Heart left ventricle (tissue), 16 donors: ENCODE measurements at regions of chr17 and their contacts with region 1.

Region 1: GRCh38 chr17:40098846-40099618 is 1.4 kb downstream of the NR1D1 start:
- DNase-seq: peak; percentile 100
- ATAC-seq: peak; percentile 75 to 87 (median 82)
- H3K4me3 ChIP-seq: peak overlapping the region; percentile 72 to 100 (median 84)
- H3K27ac ChIP-seq: peak overlapping the region; percentile 93 to 100 (median 98)
- H3K4me1 ChIP-seq: peaks cover 20 to 93% (median 79%) of the 10 kb centered on the region in 12 donors
- H3K27me3 ChIP-seq: no peaks in the 10 kb centered on the region
- CTCF ChIP-seq: no peak
- POLR2A ChIP-seq: peak; percentile 64 to 89

Region 2: DNA sequence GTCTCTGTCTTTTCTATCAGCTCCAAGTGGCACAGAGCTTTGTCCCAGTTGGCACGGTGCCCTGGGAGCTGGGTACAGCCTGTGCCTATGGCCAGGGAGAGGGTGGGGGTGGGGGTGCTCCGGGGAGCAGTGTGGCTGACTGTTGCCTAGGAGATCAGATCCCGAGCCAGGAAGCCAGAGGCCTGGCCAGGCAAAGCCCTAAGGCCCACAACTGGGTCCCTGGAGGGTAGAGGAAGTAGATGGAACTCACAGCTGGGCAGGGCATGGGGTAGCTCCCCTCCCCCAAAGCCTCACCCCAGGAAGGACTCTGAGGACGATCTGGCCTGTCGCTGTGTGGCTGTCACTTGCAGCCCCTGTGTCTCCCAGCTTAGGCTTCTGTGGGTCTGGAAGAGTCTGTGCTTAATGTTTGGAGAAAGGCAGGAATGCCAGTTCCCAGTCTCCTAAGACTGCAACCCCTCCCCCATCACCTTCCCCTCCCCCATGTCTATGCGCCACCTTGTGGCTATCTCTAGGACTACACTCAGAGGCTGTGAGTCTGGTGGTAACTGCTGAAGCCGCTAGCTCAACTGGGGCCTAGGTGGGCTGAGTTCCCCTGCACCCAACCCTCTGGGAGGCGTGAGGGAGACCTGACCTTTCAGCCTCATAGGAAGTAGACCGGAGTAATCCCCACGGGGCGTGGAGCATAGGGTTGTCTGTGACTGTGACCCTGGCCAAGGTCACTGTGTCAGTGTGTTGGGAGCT is 23.7 kb before region 1 on chr17:
- intact Hi-C with region 1: loop called in 1 of 10 experiments (anchors 1 kb)
- DNase-seq: peak; percentile 78 to 94 (median 90)
- ATAC-seq: peak; percentile 66 to 72 (median 68)
- H3K4me3 ChIP-seq: peak overlapping the region in 8 of 12 donors; percentile 2 to 27 (median 18)
- H3K27ac ChIP-seq: peak overlapping the region; percentile 62 to 100 (median 95)
- H3K4me1 ChIP-seq: peaks cover 31 to 77% (median 68%) of the 10 kb centered on the region in 12 donors
- H3K27me3 ChIP-seq: no peaks in the 10 kb centered on the region
- CTCF ChIP-seq: peak; percentile 76 to 90 (median 84)
- POLR2A ChIP-seq: no peak

Region 3: GRCh38 chr17:40602775-40603551 is 503.9 kb after region 1 on chr17:
- intact Hi-C with region 1: no loop called
- DNase-seq: no peak
- ATAC-seq: peak in 1 of 4 donors; percentile 22
- H3K4me3 ChIP-seq: no peak overlapping the region
- H3K27ac ChIP-seq: peak overlapping the region in 2 of 12 donors; percentile 62 to 75
- H3K4me1 ChIP-seq: peaks cover 0 to 22% (median 0%) of the 10 kb centered on the region in 12 donors
- H3K27me3 ChIP-seq: no peaks in the 10 kb centered on the region
- CTCF ChIP-seq: no peak
- POLR2A ChIP-seq: no peak